ENCODE measurements at regions of chr9 and their contacts with region 1.

Region 1: GRCh38 chr9:35051069-35051967 is 21.1 kb downstream of the VCP start:
- DNase-seq: peak; percentile 72
- H3K4me3 Mint-ChIP-seq: no peak overlapping the region
- H3K27ac Mint-ChIP-seq: peak overlapping the region; percentile 10
- H3K4me1 Mint-ChIP-seq: peaks cover 5% of the 10 kb centered on the region
- H3K27me3 Mint-ChIP-seq: no peaks in the 10 kb centered on the region
- CTCF ChIP-seq: peak; percentile 42

Region 2: DNA sequence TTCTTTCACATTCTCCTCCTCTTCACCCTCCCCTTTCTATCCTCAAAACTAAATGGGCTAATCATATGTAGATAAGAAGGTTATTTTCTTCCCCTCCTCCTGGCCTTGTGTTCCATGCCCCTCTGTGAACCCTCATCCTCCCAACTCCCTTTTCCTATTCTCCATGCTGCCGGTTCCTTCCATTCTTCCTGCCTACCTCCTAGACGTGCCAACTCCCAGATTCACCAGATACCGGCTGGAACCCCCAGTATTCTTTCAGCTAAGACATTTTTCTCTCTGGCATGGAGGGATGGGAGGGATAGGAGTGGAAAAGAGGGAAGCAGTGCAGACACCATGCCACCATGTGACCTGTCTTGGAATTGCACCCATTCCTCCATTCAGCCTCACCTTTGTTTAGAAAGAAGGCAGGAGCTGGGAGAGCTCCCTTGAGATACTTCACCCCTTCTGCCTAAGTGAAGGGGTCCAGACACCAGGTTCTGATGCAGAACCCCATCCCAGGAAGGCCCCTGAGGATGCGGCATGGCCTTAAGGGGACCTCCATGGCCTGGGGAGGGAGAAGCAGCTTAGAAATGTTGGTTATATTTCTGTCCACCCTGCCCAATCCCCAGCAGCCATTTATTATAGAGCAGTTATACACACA is 56.9 kb before region 1 on chr9:
- CTCF ChIA-PET with region 1: interaction called, 7 read pairs
- POLR2A ChIA-PET with region 1: interaction called, 3 read pairs
- intact Hi-C with region 1: loop called (anchors 10 kb)
- DNase-seq: peak; percentile 77
- H3K4me3 Mint-ChIP-seq: no peak overlapping the region
- H3K27ac Mint-ChIP-seq: no peak overlapping the region
- H3K4me1 Mint-ChIP-seq: peaks cover 38% of the 10 kb centered on the region
- H3K27me3 Mint-ChIP-seq: no peaks in the 10 kb centered on the region
- CTCF ChIP-seq: peak; percentile 76

Region 3: DNA sequence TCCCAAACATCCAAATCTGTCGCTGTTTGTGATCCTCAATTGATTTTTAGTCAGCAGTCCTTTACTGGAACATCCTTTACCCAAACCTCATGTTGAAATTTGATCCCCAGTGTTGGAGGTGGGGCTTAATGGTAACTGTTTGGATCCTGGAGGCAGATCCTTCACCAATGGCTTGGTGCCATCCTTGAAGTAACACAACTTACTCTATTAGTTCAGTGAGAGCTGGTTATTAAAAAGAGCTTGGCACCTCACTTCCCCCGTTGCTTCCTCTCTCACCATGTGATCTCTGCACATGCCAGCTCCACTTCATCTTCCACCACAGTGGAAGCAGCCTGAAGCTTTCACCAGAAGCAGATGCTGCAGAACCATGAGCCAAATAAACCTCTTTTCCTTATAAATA is 21.5 kb before region 1 on chr9:
- CTCF ChIA-PET with region 1: interaction called, 12 read pairs
- POLR2A ChIA-PET with region 1: no interaction called
- intact Hi-C with region 1: no loop called
- DNase-seq: peak; percentile 24
- H3K4me3 Mint-ChIP-seq: no peak overlapping the region
- H3K27ac Mint-ChIP-seq: no peak overlapping the region
- H3K4me1 Mint-ChIP-seq: peaks cover 9% of the 10 kb centered on the region
- H3K27me3 Mint-ChIP-seq: no peaks in the 10 kb centered on the region
- CTCF ChIP-seq: no peak

Region 4: DNA sequence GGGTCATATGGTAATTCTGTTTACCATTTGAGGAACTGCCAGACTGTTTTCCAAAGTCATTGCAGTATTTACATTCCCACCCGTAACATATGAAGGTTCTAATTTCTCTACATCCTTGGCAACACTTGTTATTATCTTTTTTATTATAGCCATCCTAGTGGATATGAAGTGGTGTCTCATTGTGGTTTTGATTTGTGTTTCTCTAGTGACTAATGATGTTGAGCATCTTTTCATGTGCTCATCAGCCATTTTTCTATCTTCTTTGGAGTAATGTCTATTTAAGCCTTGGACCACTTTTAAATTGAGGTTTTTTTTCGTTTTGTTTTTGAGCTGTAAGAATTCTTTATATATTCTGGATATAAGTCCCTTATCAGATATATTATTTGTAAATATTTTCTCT is 305.8 kb after region 1 on chr9:
- CTCF ChIA-PET with region 1: no interaction called
- POLR2A ChIA-PET with region 1: no interaction called
- intact Hi-C with region 1: no loop called
- DNase-seq: no peak
- H3K4me3 Mint-ChIP-seq: no peak overlapping the region
- H3K27ac Mint-ChIP-seq: no peak overlapping the region
- H3K4me1 Mint-ChIP-seq: no peaks in the 10 kb centered on the region
- H3K27me3 Mint-ChIP-seq: no peaks in the 10 kb centered on the region
- CTCF ChIP-seq: no peak

Region 5: DNA sequence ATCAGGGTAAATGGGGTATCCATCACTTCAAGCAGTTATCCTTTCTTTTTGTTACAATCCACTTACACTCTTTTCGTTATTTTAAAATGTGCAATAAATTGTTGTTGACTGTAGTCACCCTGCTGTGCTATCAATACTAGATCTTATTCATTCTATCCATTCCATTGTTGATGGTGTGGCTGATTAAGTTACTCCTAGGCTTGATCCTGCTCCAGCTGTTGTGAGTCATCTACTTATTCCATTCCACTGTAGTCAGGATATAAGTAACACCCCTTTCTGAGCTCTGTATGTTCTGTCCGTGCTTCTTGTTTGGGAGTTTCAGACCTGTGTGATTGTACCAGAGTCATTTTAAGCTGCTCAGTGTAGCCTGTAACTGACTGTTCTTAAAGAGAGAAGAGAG is 316.1 kb after region 1 on chr9:
- CTCF ChIA-PET with region 1: no interaction called
- POLR2A ChIA-PET with region 1: no interaction called
- intact Hi-C with region 1: no loop called
- DNase-seq: peak; percentile 73
- H3K4me3 Mint-ChIP-seq: no peak overlapping the region
- H3K27ac Mint-ChIP-seq: peak overlapping the region; percentile 33
- H3K4me1 Mint-ChIP-seq: peaks cover 16% of the 10 kb centered on the region
- H3K27me3 Mint-ChIP-seq: no peaks in the 10 kb centered on the region
- CTCF ChIP-seq: no peak

Region 6: GRCh38 chr9:35736201-35736633 is 684.9 kb after region 1 on chr9:
- CTCF ChIA-PET with region 1: no interaction called
- POLR2A ChIA-PET with region 1: no interaction called
- intact Hi-C with region 1: no loop called
- DNase-seq: peak; percentile 86
- H3K4me3 Mint-ChIP-seq: no peak overlapping the region
- H3K27ac Mint-ChIP-seq: no peak overlapping the region
- H3K4me1 Mint-ChIP-seq: peaks cover 10% of the 10 kb centered on the region
- H3K27me3 Mint-ChIP-seq: no peaks in the 10 kb centered on the region
- CTCF ChIP-seq: peak; percentile 75

Measured in MCF 10A (cell line).